A673 (cell line): ENCODE measurements at regions of chr2 and their contacts with region 1.

Region 1: DNA sequence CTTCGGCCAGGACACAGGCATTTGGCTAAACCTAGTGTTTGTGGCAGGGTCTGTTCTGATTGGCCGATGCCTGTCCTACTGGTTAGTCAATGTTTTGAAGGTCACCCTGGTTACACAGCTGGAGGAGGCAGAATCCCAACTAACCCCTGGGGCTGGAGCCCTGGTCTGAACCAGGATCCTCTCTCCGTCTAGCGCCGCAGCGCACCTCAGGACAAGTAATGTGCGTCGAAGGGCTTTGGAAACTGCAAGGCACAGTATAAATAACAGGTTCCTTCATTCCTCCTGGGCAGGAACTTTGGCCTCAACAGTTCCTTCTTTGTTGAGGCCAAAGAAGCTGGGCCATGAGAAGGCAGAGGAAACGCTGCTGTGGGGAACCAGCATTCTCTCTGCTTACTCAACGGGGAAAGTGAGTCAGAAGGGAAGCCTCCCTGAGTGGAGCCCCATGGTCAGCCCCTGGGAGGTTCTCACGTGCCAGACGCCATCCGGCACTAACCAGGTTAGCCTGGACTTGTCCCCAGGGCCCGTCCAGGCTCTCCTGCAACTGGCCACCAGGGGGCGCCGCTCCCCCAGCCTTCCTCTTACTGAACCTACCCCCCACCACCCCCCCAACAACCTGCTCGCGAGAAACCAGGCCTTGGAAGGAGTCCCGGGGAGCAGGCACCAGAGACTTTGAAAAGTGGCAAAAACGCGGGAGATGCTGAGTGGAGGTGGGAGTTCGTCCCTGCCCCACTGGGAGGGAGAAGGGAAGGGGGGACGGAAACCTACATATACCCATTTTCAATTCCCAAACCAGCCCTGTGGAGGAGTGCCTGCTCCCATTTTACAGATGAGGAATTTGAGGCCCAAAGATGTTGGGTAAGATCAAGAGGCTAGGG is 19.8 kb downstream of the TEX44 start:
- DNase-seq: peak; percentile 88
- H3K4me3 ChIP-seq: no peak overlapping the region
- H3K27ac ChIP-seq: no peak overlapping the region
- H3K4me1 ChIP-seq: peaks cover 27% of the 10 kb centered on the region
- H3K27me3 ChIP-seq: no peaks in the 10 kb centered on the region
- CTCF ChIP-seq: peak; percentile 97

Region 2: GRCh38 chr2:231425811-231426728 is 186.3 kb before region 1 on chr2:
- CTCF ChIA-PET with region 1: no interaction called
- POLR2A ChIA-PET with region 1: no interaction called
- intact Hi-C with region 1: no loop called
- DNase-seq: no peak
- H3K4me3 ChIP-seq: no peak overlapping the region
- H3K27ac ChIP-seq: no peak overlapping the region
- H3K4me1 ChIP-seq: no peaks in the 10 kb centered on the region
- H3K27me3 ChIP-seq: no peaks in the 10 kb centered on the region
- CTCF ChIP-seq: no peak

Region 3: DNA sequence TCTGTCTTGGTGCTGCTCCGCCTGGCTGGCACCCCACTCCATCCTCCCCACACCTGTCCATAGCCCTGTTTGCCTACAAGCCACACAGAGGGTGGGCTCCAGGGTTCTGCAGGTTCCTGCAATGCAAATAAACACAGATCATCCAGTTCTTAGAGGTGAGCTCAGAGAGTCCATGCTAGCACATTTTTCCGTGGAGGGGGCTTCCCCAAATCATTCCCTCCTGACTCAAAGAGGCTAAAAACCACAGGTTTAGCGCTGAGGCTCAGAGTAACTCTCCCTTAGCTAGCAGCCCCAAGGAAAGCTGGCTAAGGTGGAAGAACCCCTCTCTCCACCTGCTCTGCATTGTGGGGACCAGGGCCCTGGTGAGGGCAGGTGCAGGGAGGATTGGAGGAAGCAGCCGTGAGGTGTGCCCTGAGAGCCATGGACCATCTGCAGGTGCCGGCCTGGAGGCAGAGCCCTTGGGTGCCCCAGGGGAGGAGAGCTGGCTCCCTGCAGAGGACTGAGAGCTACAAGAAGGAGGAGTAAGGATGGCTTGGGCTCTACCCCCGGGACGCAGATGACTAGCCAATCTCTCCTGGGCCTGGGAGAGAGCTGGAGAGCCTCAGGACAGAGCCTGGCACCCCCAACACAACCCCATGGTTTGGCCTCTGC is 43.5 kb before region 1 on chr2:
- CTCF ChIA-PET with region 1: no interaction called
- POLR2A ChIA-PET with region 1: no interaction called
- intact Hi-C with region 1: no loop called
- DNase-seq: no peak
- H3K4me3 ChIP-seq: no peak overlapping the region
- H3K27ac ChIP-seq: no peak overlapping the region
- H3K4me1 ChIP-seq: no peaks in the 10 kb centered on the region
- H3K27me3 ChIP-seq: no peaks in the 10 kb centered on the region
- CTCF ChIP-seq: no peak

Region 4: GRCh38 chr2:231601349-231602229 is 10.8 kb before region 1 on chr2:
- CTCF ChIA-PET with region 1: interaction called, 11 read pairs
- POLR2A ChIA-PET with region 1: no interaction called
- intact Hi-C with region 1: no loop called
- DNase-seq: peak; percentile 81
- H3K4me3 ChIP-seq: no peak overlapping the region
- H3K27ac ChIP-seq: no peak overlapping the region
- H3K4me1 ChIP-seq: peaks cover 12% of the 10 kb centered on the region
- H3K27me3 ChIP-seq: no peaks in the 10 kb centered on the region
- CTCF ChIP-seq: peak; percentile 86

Region 5: DNA sequence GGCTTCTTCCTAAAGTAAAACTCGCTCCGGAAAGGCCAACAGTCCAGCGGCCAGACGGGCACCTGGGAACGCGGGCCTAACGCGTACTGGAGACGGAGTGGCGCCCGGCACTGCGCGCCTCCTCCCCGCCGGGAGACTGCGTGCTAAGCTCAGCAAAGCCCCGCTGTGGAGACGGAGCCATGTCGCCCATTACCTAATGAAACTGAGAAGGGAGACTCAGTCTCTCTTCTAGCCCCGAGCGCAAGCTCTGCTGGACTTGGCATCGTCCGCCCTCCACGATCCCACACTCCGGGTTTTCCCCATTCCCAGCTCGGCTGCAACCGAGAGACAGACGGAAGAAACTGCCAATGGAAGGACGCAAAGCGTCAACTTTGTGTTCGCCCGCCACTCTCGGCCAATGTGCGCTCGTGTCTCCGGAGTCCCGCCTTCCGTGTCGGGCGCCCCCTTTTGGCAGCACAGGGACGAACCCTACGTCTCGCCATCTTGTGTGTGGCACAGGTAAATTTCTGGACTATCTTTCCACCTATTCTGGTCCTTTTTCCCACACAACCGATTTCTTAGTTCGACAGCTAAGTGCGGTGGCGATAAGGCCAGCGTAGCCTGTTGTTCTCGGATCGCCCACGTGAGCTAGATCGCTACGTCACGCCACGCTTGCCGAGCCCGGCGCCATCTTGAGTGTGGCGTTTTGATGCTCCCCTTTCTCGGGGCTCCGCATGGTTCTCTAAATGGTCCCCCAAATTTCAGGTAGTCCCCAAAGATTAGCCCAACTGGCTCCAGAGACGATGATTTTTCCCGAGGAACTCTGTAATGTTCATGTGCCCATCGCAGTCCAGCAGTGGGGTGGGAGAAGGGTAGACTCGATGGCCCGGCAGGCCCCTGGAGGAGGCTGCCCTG is 94.6 kb after region 1 on chr2:
- CTCF ChIA-PET with region 1: no interaction called
- POLR2A ChIA-PET with region 1: no interaction called
- intact Hi-C with region 1: loop called (anchors 2 kb)
- DNase-seq: peak; percentile 99
- H3K4me3 ChIP-seq: peak overlapping the region; percentile 59
- H3K27ac ChIP-seq: peak overlapping the region; percentile 97
- H3K4me1 ChIP-seq: peaks cover 15% of the 10 kb centered on the region
- H3K27me3 ChIP-seq: no peaks in the 10 kb centered on the region
- CTCF ChIP-seq: peak; percentile 99

Region 6: GRCh38 chr2:231713730-231714430 is 101.5 kb after region 1 on chr2:
- CTCF ChIA-PET with region 1: no interaction called
- POLR2A ChIA-PET with region 1: no interaction called
- intact Hi-C with region 1: loop called (anchors 1 kb)
- DNase-seq: peak; percentile 95
- H3K4me3 ChIP-seq: no peak overlapping the region
- H3K27ac ChIP-seq: peak overlapping the region; percentile 20
- H3K4me1 ChIP-seq: peaks cover 25% of the 10 kb centered on the region
- H3K27me3 ChIP-seq: no peaks in the 10 kb centered on the region
- CTCF ChIP-seq: peak; percentile 94

Region 7: GRCh38 chr2:231780909-231781797 is 168.7 kb after region 1 on chr2 and contains the start of gene PDE6D:
- CTCF ChIA-PET with region 1: no interaction called
- POLR2A ChIA-PET with region 1: no interaction called
- intact Hi-C with region 1: loop called (anchors 5 kb)
- DNase-seq: peak; percentile 99
- H3K4me3 ChIP-seq: peak within 1 kb of the TSS; percentile 78
- H3K27ac ChIP-seq: peak within 1 kb of the TSS; percentile 78
- H3K4me1 ChIP-seq: peaks cover 10% of the 10 kb centered on the region
- H3K27me3 ChIP-seq: no peaks in the 10 kb centered on the region
- CTCF ChIP-seq: no peak
- total RNA-seq, gene PDE6D: 19.7 and 27.3 TPM in 2 replicates